ENCODE measurements at regions of chr6 and their contacts with region 1.

Region 1: DNA sequence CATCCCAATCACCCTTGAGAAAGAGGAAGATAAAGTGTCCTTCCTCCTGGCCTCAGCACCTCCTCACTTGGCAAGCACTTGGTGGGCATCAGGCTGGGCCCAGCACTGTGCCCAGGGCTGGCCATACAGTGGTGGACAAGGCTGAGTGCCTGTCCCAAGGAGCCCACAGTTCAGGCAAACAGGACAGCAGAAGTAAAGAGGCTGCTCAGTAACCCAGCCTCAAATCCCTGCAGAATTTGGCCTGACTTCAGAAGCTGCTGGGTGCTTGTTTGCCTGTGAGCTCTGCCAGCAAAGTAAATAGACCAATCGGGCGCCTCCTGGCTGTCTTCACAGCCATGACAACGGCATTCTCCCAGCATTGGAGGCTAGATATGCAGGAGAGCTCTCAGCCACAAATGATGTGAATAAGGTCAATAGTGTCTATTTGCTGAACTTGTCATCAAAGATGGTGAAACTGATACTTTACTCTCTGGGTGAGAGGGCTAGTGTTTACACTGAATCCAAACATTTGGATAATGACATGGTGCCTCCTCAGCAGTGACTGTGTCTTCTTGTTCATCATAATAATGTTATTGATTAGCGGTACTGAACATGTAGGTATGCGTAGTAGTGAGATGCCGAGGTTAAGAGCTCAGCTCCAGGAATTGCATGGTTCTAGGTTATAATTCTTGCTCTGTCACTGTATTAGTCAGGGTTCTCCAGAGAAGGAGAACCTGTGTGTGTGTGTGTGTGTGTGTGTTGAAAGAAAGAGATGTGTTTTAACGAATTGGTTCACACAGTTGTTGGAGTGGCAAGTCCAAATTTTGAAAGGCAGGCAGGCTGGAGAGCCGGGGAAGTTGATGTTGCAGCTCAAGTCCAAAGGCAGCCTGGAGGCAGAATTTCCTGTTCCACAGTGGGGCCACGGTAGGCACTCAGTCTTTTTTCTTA is 36.8 kb upstream of the FANCE start:
- DNase-seq: peak; percentile 72 to 78
- H3K4me3 ChIP-seq: no peak overlapping the region
- H3K4me3 Mint-ChIP-seq: no peak overlapping the region
- H3K27ac Mint-ChIP-seq: no peak overlapping the region
- H3K4me1 ChIP-seq: peaks cover 7% of the 10 kb centered on the region; the same call in 1 of the 2 replicates
- H3K4me1 Mint-ChIP-seq: peaks cover 16% of the 10 kb centered on the region
- H3K27me3 ChIP-seq: no peaks in the 10 kb centered on the region
- H3K27me3 Mint-ChIP-seq: no peaks in the 10 kb centered on the region
- CTCF ChIP-seq: peak; percentile 36 to 73

Region 2: GRCh38 chr6:35342258-35343091 is 72.9 kb before region 1 on chr6 and contains the start of gene PPARD:
- CTCF ChIA-PET with region 1: interaction called, 29 read pairs
- POLR2A ChIA-PET with region 1: interaction called, 3 read pairs
- intact Hi-C with region 1: loop called (anchors 1 kb)
- DNase-seq: peak; percentile 97 to 99
- H3K4me3 ChIP-seq: peak within 1 kb of the TSS; percentile 84
- H3K4me3 Mint-ChIP-seq: peak within 1 kb of the TSS; percentile 85
- H3K27ac Mint-ChIP-seq: peak within 1 kb of the TSS; percentile 78
- H3K4me1 ChIP-seq: peaks cover 6% of the 10 kb centered on the region
- H3K4me1 Mint-ChIP-seq: no peaks in the 10 kb centered on the region
- H3K27me3 ChIP-seq: no peaks in the 10 kb centered on the region
- H3K27me3 Mint-ChIP-seq: no peaks in the 10 kb centered on the region
- CTCF ChIP-seq: peak; percentile 88 to 97
- total RNA-seq, gene PPARD: 11.3 and 12.0 TPM in 2 replicates

Region 3: DNA sequence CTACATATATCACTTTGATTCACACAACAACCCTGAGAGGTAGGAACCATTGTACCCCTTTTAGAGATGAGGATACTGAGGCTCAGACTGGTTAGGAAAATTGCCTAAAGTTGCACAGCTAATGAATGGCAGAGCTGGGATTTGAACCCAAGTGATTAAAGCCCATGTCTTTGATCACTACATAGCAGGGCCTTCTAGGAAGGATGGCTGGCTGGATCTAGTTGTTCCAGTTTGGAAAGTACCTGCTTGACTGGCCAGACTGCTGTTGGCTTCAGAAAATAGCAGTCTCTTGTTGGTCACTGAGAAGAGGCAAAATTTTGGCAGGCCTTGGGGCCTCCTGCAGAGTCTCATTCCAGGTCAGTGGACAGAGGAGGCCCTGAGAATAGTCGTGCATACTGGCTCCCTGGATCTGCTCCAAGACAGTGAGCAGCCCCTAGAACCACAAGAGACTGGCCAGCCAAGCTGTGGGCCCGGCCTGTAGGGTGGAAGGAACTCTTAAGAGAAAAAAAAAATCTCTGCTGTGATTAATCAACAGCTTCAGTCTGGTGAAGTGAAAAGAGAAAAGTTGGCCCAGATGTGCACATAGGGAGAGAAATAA is 55.5 kb before region 1 on chr6:
- CTCF ChIA-PET with region 1: interaction called, 9 read pairs
- POLR2A ChIA-PET with region 1: no interaction called
- intact Hi-C with region 1: loop called (anchors 1 kb)
- DNase-seq: no peak
- H3K4me3 ChIP-seq: no peak overlapping the region
- H3K4me3 Mint-ChIP-seq: no peak overlapping the region
- H3K27ac Mint-ChIP-seq: no peak overlapping the region
- H3K4me1 ChIP-seq: peaks cover 12% of the 10 kb centered on the region; the same call in 1 of the 2 replicates
- H3K4me1 Mint-ChIP-seq: peaks cover 8% of the 10 kb centered on the region
- H3K27me3 ChIP-seq: no peaks in the 10 kb centered on the region
- H3K27me3 Mint-ChIP-seq: no peaks in the 10 kb centered on the region
- CTCF ChIP-seq: no peak

Region 4: DNA sequence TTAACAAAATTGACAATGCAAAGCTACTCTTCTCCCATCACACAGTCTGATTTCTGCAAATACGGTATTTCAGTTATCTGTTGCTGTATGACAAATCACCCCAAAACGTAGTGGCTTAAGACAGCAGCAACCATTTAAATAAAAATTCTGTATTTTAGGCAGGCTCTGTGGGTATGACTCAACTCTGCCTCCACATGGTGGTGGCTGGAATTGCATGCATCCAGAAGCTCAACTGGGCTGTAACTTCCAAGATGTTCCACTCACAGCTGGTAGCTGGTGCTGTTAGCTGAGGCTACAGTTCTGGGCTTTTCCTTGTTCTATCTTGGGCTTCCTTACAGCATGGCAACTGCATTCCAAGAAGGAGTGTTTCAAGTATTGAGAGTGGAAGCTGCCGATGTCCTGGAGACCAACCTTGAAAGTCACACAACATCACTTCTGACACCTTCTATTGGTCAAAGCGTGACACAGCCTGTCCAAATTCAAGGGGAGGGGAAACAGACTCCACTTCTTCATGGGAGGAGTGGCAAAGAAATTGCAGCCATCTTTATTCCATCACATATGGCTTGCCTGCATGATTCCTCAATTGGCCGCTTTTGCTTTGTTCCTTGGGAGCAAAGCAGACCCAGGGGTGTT is 137.1 kb after region 1 on chr6:
- CTCF ChIA-PET with region 1: no interaction called
- POLR2A ChIA-PET with region 1: no interaction called
- intact Hi-C with region 1: no loop called
- DNase-seq: peak in 1 of 2 experiments; percentile 39
- H3K4me3 ChIP-seq: no peak overlapping the region
- H3K4me3 Mint-ChIP-seq: no peak overlapping the region
- H3K27ac Mint-ChIP-seq: no peak overlapping the region
- H3K4me1 ChIP-seq: no peaks in the 10 kb centered on the region
- H3K4me1 Mint-ChIP-seq: peaks cover 8% of the 10 kb centered on the region
- H3K27me3 ChIP-seq: no peaks in the 10 kb centered on the region
- H3K27me3 Mint-ChIP-seq: no peaks in the 10 kb centered on the region
- CTCF ChIP-seq: peak; percentile 72 to 83

Measured in Caco-2 (cell line).